ENCODE measurements at regions of chr10 and their contacts with region 1.

Region 1: GRCh38 chr10:123573236-123574108 is 92.7 kb upstream of the GPR26 start:
- DNase-seq: peak; percentile 53 to 73 (median 56)
- ATAC-seq: peak; percentile 52
- H3K4me3 ChIP-seq: no peak overlapping the region
- H3K27ac ChIP-seq: no peak overlapping the region
- H3K4me1 ChIP-seq: no peaks in the 10 kb centered on the region
- H3K27me3 ChIP-seq: no peaks in the 10 kb centered on the region
- CTCF ChIP-seq: peak; percentile 30 to 59 (median 46)
- POLR2A ChIP-seq: no peak

Region 2: GRCh38 chr10:123622381-123622780 is 48.9 kb after region 1 on chr10:
- intact Hi-C with region 1: no loop called
- DNase-seq: no peak
- ATAC-seq: no peak
- H3K4me3 ChIP-seq: no peak overlapping the region
- H3K27ac ChIP-seq: no peak overlapping the region
- H3K4me1 ChIP-seq: no peaks in the 10 kb centered on the region
- H3K27me3 ChIP-seq: no peaks in the 10 kb centered on the region
- CTCF ChIP-seq: no peak
- POLR2A ChIP-seq: no peak

Region 3: DNA sequence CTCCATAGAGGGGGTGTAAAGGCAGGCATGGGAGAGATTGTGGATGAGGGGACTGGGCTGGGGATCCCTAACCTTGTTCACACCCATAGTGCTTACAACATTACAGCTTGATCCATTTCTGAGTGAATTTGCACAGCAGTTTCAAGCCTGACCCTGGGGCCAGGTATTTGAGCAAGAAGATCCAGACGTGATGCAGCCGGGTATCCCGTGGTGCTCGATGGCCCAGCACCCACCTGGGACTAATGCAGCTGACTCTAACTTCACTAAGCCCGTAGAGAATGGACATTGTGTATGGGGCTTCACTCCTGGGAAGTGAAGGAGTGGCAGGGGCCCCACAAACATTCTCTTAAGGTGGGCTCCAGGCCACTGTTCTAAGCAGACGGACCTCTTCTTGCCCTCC is 125.3 kb after region 1 on chr10:
- intact Hi-C with region 1: no loop called
- DNase-seq: no peak
- ATAC-seq: no peak
- H3K4me3 ChIP-seq: no peak overlapping the region
- H3K27ac ChIP-seq: no peak overlapping the region
- H3K4me1 ChIP-seq: no peaks in the 10 kb centered on the region
- H3K27me3 ChIP-seq: no peaks in the 10 kb centered on the region
- CTCF ChIP-seq: no peak
- POLR2A ChIP-seq: no peak

Region 4: GRCh38 chr10:123967396-123968243 is 394.1 kb after region 1 on chr10:
- intact Hi-C with region 1: loop called (anchors 5 kb)
- DNase-seq: peak; percentile 61 to 73 (median 64)
- ATAC-seq: peak; percentile 55
- H3K4me3 ChIP-seq: no peak overlapping the region
- H3K27ac ChIP-seq: no peak overlapping the region
- H3K4me1 ChIP-seq: peaks cover 1% of the 10 kb centered on the region
- H3K27me3 ChIP-seq: peaks cover 0 to 8% of the 10 kb centered on the region in 2 donors
- CTCF ChIP-seq: peak; percentile 70 to 79 (median 73)
- POLR2A ChIP-seq: no peak

Region 5: GRCh38 chr10:124389613-124390361 is 816.3 kb after region 1 on chr10:
- intact Hi-C with region 1: loop called (anchors 10 kb)
- DNase-seq: peak in 1 of 4 donors; percentile 20
- ATAC-seq: no peak
- H3K4me3 ChIP-seq: no peak overlapping the region
- H3K27ac ChIP-seq: no peak overlapping the region
- H3K4me1 ChIP-seq: peaks cover 12% of the 10 kb centered on the region
- H3K27me3 ChIP-seq: no peaks in the 10 kb centered on the region
- CTCF ChIP-seq: no peak
- POLR2A ChIP-seq: no peak